OCI-LY7 (cell line): ENCODE measurements at regions of chr2 and their contacts with region 1.

Region 1: GRCh38 chr2:159712143-159712928 is at the start of gene MARCHF7:
- DNase-seq: peak; percentile 95
- H3K4me3 ChIP-seq: peak within 1 kb of the TSS; percentile 91
- H3K27ac ChIP-seq: peak within 1 kb of the TSS; percentile 86
- H3K4me1 ChIP-seq: peaks cover 43% of the 10 kb centered on the region
- CTCF ChIP-seq: peak; percentile 70
- total RNA-seq, gene MARCHF7: 48.8 and 56.2 TPM in 2 replicates

Region 2: DNA sequence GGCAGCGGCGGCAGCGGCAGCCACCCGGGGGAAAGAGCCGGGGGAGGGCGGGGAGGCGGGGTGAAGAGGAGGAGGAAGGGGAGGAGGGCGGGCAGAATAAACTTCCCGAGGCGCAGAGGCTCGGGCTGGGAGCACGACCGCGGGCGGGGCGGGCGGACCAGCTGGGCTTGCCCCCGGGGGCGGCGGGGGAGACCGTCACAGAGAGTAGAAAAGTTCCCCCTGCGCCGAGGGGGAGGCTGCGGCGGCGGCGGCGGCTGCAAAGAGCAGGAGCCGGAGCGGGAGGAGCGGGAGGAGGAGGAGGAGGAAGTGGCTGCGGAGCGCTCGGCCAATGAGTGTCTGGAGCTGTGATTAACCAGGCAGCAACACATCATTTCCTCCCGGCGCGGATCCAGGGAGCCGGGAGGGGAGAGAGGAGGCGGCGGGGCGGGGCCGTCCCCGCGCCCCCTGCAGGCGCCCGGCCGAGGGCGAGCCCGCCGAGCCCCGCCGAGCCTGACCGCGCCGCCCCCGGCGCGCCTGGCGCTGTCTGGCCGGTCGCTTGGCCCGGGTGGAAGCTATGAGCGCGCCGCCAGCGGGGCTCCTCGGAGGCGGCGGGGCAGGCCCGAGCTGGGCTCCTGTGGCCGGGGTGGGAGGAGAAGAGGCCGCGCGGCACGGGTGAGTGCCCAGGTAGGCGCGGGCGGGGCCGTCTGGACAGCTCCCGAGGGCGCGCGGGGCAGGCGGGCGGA is 1836.1 kb before region 1 on chr2 and contains the start of gene ACVR1:
- CTCF ChIA-PET with region 1: no interaction called
- POLR2A ChIA-PET with region 1: no interaction called
- intact Hi-C with region 1: loop called (anchors 10 kb)
- DNase-seq: peak; percentile 87
- H3K4me3 ChIP-seq: peak within 1 kb of the TSS; percentile 85
- H3K27ac ChIP-seq: no peak within 1 kb of the TSS
- H3K4me1 ChIP-seq: peaks cover 15% of the 10 kb centered on the region
- CTCF ChIP-seq: no peak; the same call in 1 of the 2 replicates
- total RNA-seq, gene ACVR1: 0.13 and 1.6 TPM in 2 replicates

Region 3: DNA sequence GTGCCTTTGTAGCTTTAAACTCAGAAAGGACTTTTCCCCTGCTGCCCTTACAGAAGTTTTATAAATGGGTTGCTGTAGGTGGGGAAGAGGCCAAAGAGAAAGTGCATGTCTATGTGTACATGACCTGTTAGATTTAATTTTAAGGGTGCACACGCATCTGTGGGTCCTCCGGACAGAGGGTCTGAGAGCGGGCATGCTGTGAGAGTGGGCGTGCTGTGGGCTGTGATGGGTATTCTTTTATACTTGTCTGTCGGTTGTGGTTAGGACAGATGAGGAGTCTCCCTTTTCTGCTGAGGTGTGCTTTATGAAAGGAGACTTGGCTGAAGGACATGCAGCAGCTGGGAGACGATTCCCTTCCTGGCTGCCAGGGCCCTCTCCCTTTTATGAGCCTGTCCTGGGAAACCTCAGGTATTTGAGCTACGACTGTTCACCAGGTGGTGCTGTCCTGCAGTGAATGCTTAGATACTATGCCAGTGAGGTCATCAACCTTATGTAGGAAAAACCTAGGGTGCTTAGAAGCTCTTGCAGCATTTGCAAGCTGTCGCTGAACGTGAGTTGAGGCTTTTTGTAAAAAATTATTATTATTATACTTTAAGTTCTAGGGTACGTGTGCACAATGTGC is 676.4 kb before region 1 on chr2:
- CTCF ChIA-PET with region 1: no interaction called
- POLR2A ChIA-PET with region 1: no interaction called
- intact Hi-C with region 1: no loop called
- DNase-seq: peak; percentile 2
- H3K4me3 ChIP-seq: no peak overlapping the region
- H3K27ac ChIP-seq: no peak overlapping the region
- H3K4me1 ChIP-seq: no peaks in the 10 kb centered on the region
- CTCF ChIP-seq: no peak

Region 4: GRCh38 chr2:159286709-159287441 is 425.5 kb before region 1 on chr2:
- CTCF ChIA-PET with region 1: no interaction called
- POLR2A ChIA-PET with region 1: interaction called, 4 read pairs
- intact Hi-C with region 1: loop called (anchors 2 kb)
- DNase-seq: peak; percentile 97
- H3K4me3 ChIP-seq: peak overlapping the region; percentile 73
- H3K27ac ChIP-seq: no peak overlapping the region
- H3K4me1 ChIP-seq: peaks cover 7% of the 10 kb centered on the region
- CTCF ChIP-seq: no peak

Region 5: GRCh38 chr2:159516241-159516766 is 196.0 kb before region 1 on chr2:
- CTCF ChIA-PET with region 1: no interaction called
- POLR2A ChIA-PET with region 1: interaction called, 10 read pairs
- intact Hi-C with region 1: loop called (anchors 2 kb)
- DNase-seq: peak; percentile 52
- H3K4me3 ChIP-seq: peak overlapping the region; percentile 64
- H3K27ac ChIP-seq: no peak overlapping the region
- H3K4me1 ChIP-seq: peaks cover 6% of the 10 kb centered on the region
- CTCF ChIP-seq: 0 out of 2 replicates have a peak, but pooled peaks have one; percentile 26

Region 6: DNA sequence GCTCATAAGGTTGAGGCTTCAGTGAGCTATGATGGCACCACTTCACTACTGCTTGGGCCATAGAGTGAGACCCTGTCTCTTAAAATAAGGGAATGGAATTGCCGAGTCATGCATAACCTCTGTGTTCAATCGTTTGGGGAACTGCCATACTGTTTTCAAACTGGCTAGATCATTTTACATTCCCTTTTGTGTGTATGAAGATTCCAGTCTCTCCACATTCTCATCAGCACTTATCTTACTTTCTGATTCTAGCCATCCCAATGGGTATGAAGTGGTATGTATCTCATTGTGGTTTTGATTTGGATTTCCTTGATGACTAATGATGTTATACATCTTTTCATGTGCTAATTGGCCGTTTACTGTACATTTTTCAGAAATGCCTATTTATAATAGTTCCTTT is 23.7 kb after region 1 on chr2:
- CTCF ChIA-PET with region 1: no interaction called
- POLR2A ChIA-PET with region 1: interaction called, 10 read pairs
- intact Hi-C with region 1: no loop called
- DNase-seq: no peak
- H3K4me3 ChIP-seq: no peak overlapping the region
- H3K27ac ChIP-seq: no peak overlapping the region
- H3K4me1 ChIP-seq: no peaks in the 10 kb centered on the region
- CTCF ChIP-seq: no peak

Region 7: GRCh38 chr2:159998961-159999360 is 286.6 kb after region 1 on chr2:
- CTCF ChIA-PET with region 1: no interaction called
- POLR2A ChIA-PET with region 1: no interaction called
- intact Hi-C with region 1: no loop called
- DNase-seq: no peak
- H3K4me3 ChIP-seq: no peak overlapping the region
- H3K27ac ChIP-seq: no peak overlapping the region
- H3K4me1 ChIP-seq: no peaks in the 10 kb centered on the region
- CTCF ChIP-seq: peak; percentile 57